CD14-positive monocyte (primary cell): ENCODE measurements at regions of chr2 and their contacts with region 1.

Region 1: GRCh38 chr2:36355151-36355889 is at the start of gene CRIM1:
- DNase-seq: peak in 1 of 3 donors; percentile 19
- H3K4me3 ChIP-seq: peak within 1 kb of the TSS; percentile 35 to 71 (median 38)
- H3K4me3 Mint-ChIP-seq: peak within 1 kb of the TSS; percentile 80 to 90
- H3K27ac ChIP-seq: no peak within 1 kb of the TSS
- H3K27ac Mint-ChIP-seq: peak within 1 kb of the TSS in 1 of 7 donors; percentile 49
- H3K4me1 ChIP-seq: peaks cover 49 to 51% of the 10 kb centered on the region in 2 donors
- H3K4me1 Mint-ChIP-seq: peaks cover 58% of the 10 kb centered on the region
- H3K27me3 ChIP-seq: peaks cover 47 to 51% of the 10 kb centered on the region in 2 donors
- H3K27me3 Mint-ChIP-seq: peaks cover 44 to 59% (median 45%) of the 10 kb centered on the region in 3 donors
- CTCF ChIP-seq: no peak
- polyA plus RNA-seq, gene CRIM1: 0.08 to 0.27 TPM in 2 of 3 donors, not detected in the other

Region 2: GRCh38 chr2:36322108-36322507 is 33.2 kb before region 1 on chr2:
- intact Hi-C with region 1: no loop called
- DNase-seq: no peak
- H3K4me3 ChIP-seq: no peak overlapping the region
- H3K4me3 Mint-ChIP-seq: no peak overlapping the region
- H3K27ac ChIP-seq: no peak overlapping the region
- H3K27ac Mint-ChIP-seq: no peak overlapping the region
- H3K4me1 ChIP-seq: no peaks in the 10 kb centered on the region
- H3K4me1 Mint-ChIP-seq: no peaks in the 10 kb centered on the region
- H3K27me3 ChIP-seq: no peaks in the 10 kb centered on the region
- H3K27me3 Mint-ChIP-seq: peaks cover 2 to 9% (median 5%) of the 10 kb centered on the region in 3 donors
- CTCF ChIP-seq: no peak

Region 3: GRCh38 chr2:36663851-36664695 is 308.8 kb after region 1 on chr2:
- intact Hi-C with region 1: loop called in 1 of 2 experiments (anchors 10 kb)
- DNase-seq: peak; percentile 19 to 36 (median 32)
- H3K4me3 ChIP-seq: no peak overlapping the region
- H3K4me3 Mint-ChIP-seq: no peak overlapping the region
- H3K27ac ChIP-seq: no peak overlapping the region
- H3K27ac Mint-ChIP-seq: no peak overlapping the region
- H3K4me1 ChIP-seq: no peaks in the 10 kb centered on the region
- H3K4me1 Mint-ChIP-seq: no peaks in the 10 kb centered on the region
- H3K27me3 ChIP-seq: no peaks in the 10 kb centered on the region
- H3K27me3 Mint-ChIP-seq: peaks cover 0 to 2% (median 0%) of the 10 kb centered on the region in 3 donors
- CTCF ChIP-seq: peak; percentile 86

Region 4: GRCh38 chr2:36785179-36785795 is 430.0 kb after region 1 on chr2:
- intact Hi-C with region 1: loop called in 1 of 2 experiments (anchors 10 kb)
- DNase-seq: peak; percentile 25 to 48 (median 46)
- H3K4me3 ChIP-seq: no peak overlapping the region
- H3K4me3 Mint-ChIP-seq: no peak overlapping the region
- H3K27ac ChIP-seq: no peak overlapping the region
- H3K27ac Mint-ChIP-seq: no peak overlapping the region
- H3K4me1 ChIP-seq: peaks cover 11 to 12% of the 10 kb centered on the region in 2 donors
- H3K4me1 Mint-ChIP-seq: peaks cover 15% of the 10 kb centered on the region
- H3K27me3 ChIP-seq: no peaks in the 10 kb centered on the region
- H3K27me3 Mint-ChIP-seq: peaks cover 0 to 7% (median 0%) of the 10 kb centered on the region in 3 donors
- CTCF ChIP-seq: peak; percentile 94